AG04450 (cell line): ENCODE measurements at regions of chr6 and their contacts with region 1.

Region 1: DNA sequence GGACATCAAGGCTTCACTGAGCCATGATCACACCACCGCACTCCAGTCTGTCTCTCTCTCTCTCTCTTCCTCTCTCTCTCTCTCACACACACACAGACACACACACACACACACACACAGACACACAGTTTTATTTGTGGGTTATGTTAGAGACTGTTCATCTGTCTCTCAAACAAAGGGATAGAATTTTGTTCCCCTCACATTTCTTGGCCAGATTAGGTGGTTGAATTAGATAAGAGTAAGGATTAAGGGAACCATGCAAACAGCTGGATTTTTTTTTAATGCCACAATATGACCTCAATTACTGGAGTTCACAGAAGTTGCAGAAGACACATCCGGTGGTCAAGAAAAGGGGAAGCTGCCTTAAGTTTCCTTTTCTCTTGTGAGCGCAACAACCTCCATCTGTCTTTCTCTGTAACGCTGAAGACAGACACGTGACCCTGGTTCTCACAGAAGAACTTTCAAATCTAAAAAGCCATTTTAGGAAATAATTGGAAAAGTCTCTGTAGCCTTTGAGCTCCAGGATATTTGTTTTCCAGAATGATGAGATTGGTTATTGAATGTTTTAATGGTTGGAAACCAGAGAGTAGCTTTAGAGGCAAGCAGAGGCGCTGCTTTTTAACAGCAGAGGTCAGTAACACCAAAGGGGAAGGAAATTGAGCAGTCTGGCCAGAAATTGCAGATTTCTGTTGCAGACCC is 33.0 kb upstream of the LGSN start:
- DNase-seq: peak; percentile 15
- H3K4me3 ChIP-seq: no peak overlapping the region
- H3K27ac ChIP-seq: no peak overlapping the region
- H3K27me3 ChIP-seq: no peaks in the 10 kb centered on the region
- CTCF ChIP-seq: peak; percentile 73

Region 2: DNA sequence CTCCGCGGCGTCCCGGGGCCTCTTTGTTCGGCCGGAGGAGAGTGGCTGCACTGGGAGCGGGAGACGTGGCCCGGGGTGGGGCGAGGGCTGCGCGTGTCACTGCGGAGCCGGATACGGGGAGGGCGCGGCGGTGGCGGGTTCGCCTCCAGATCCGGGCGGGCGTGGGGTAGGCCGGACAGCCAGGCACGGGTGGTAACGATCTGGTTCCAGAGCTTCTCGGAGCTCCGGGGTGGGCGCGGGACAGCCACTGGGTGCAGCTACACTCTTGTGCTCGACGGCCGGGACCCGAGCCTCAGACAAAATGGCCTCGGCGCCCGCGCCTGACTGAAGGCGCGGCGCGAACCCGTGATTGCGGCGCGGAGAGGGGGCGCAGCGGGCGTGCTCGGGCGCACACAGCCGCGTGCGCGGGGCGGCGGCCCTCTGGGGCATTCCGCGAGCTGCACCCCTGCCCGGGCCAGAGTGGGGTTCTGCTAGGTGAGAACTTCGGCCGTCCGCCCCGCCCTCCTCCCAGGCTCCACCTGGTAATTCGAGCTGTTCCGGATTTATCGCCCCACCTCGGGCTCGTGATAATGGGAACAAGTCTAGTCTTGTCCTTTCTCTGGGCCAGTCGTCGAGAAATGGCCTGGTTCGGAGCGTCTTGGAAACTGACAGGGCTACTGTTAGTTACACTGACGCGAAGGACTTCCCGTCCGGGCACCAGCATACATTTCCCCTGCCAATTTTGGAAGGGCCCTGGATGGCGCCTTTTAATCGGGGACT is 220.6 kb after region 1 on chr6:
- CTCF ChIA-PET with region 1: interaction called, 17 read pairs
- POLR2A ChIA-PET with region 1: no interaction called
- DNase-seq: no peak
- H3K4me3 ChIP-seq: peak overlapping the region; percentile 86
- H3K27ac ChIP-seq: peak overlapping the region; percentile 92
- H3K27me3 ChIP-seq: no peaks in the 10 kb centered on the region
- CTCF ChIP-seq: no peak

Region 3: DNA sequence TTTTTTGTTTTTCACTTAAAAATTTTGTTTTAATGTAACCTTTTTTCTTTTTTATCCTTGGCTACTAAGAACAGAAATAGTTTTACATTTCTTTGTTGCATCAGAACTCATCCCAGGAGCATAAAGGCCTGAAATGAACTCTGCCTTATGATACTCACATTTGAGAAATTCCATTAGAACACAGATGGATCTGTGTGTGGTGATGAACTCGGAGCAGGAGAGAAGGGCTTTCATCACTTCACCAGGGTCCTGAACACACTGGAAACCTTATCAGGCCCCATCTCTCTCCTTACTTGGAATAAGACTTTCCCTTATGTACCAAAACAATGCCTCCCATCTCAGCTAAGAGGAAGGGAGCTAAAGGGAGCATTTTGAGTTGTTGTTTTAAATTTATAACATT is 422.2 kb after region 1 on chr6:
- CTCF ChIA-PET with region 1: interaction called, 23 read pairs
- POLR2A ChIA-PET with region 1: no interaction called
- DNase-seq: no peak
- H3K4me3 ChIP-seq: no peak overlapping the region
- H3K27ac ChIP-seq: no peak overlapping the region
- H3K27me3 ChIP-seq: no peaks in the 10 kb centered on the region
- CTCF ChIP-seq: no peak